CD4-positive, alpha-beta memory T cell (primary cell): ENCODE measurements at regions of chr17 and their contacts with region 1.

Region 1: DNA sequence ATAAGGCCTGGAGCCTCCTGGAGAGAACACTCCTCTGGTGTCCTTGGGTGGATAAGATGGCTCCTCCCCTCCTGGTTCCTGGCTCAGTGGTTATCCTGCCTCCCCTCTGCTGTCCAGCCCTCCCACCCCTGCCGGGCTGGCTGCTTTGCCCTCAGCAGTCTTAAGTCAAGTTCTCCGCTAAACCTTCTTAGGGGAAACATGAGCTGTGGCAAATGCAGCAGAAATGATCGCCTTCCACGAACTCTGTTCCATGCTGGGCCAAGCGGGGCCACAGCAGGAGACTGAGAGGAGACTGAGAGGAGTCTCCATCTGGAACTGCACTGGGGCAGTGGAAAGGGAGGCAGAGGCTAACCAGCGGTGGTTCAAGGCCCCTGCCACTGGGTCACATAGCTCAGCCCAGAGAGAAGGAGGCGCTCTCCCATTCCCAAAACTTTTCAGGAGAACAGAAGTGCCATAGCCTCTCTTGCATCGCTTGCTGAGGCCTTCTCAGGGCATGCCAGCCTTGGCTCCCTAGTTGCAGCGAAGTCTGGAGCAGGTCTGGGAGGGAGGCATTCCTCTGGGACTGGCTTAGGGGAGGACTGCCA is 26.9 kb downstream of the TNS4 start:
- DNase-seq: no peak
- H3K4me3 ChIP-seq: no peak overlapping the region
- H3K4me3 Mint-ChIP-seq: no peak overlapping the region
- H3K27ac ChIP-seq: no peak overlapping the region
- H3K27ac Mint-ChIP-seq: peak overlapping the region in 2 of 7 donors; percentile 18 to 68
- H3K4me1 ChIP-seq: peaks cover 32% of the 10 kb centered on the region
- H3K4me1 Mint-ChIP-seq: peaks cover 6 to 26% (median 6%) of the 10 kb centered on the region in 4 donors
- H3K27me3 ChIP-seq: no peaks in the 10 kb centered on the region
- H3K27me3 Mint-ChIP-seq: no peaks in the 10 kb centered on the region

Region 2: DNA sequence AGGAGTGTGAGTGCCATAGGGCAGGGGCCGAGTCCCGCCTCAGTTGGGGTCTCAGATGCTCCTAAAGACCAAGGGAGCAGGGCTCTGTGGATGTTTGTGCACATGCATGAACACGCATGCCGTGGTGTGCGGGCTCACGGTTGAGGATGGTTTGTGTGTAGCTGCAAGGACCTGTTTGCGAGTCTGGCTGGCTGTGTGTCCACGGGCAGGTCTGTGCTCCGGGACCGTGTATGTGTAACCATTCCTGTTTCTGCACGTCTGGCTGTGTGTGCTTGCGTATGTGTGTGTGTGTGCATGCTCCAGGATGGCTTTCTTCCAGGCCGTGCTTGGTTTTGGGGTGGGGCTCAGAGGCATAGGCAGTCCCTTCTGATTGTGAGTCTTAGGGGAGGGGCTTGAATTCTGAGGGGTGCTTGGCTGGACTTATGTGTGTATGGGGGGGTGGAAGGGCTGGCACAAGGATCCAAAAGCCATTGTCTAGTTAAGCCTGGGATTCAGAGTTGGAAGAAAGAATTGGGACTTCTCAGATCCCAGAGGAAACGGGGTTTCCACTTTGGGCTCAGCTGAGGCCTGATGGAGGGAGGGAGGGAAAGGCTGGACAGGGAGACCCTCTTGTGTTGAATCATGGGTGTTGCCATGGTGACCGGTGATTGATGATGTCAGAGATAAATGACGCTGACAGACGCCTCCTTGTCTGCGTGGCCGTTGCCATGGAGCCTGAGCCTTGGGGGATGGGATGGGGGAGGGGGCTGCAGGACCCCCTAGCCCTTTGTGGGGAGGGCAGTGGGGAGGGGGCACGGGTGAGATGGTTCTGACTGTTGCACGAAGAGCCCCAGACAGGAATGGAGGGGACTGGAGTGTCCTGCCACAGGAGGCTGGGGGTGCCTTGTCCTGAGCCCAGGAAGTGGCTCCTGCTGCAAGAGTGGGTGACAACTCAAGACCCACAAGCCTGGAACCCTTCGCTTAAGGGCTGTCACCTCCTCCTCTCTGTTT is 124.3 kb before region 1 on chr17:
- CTCF ChIA-PET with region 1: no interaction called
- POLR2A ChIA-PET with region 1: no interaction called
- intact Hi-C with region 1: no loop called
- DNase-seq: no peak
- H3K4me3 ChIP-seq: no peak overlapping the region
- H3K4me3 Mint-ChIP-seq: no peak overlapping the region
- H3K27ac ChIP-seq: no peak overlapping the region
- H3K27ac Mint-ChIP-seq: peak overlapping the region in 5 of 7 donors; percentile 46 to 95 (median 87)
- H3K4me1 ChIP-seq: peaks cover 33% of the 10 kb centered on the region
- H3K4me1 Mint-ChIP-seq: peaks cover 20 to 68% (median 37%) of the 10 kb centered on the region in 4 donors
- H3K27me3 ChIP-seq: no peaks in the 10 kb centered on the region
- H3K27me3 Mint-ChIP-seq: no peaks in the 10 kb centered on the region

Region 3: DNA sequence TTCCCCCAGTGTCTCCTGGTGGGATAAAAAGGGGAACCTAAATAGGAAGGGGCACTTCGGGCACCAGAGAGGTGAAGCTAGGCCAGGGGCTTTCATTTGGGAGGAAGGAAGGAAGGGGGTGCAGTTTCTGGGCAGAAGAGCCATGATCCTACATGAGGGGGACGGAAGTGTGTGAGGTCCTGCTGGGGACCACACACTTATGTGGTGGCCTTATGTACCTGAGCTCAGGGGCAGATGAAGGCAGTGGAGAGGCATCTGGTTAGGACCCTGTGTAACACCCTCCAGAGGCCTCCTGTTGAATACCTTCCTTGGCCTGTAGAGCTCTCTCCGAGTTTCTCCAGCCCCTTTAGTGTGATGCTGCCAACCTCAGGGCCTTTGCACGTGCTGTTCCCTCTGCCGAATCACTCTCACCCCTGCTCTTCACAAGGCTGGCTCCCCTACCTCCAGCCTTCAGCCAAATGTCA is 10.1 kb before region 1 on chr17:
- CTCF ChIA-PET with region 1: interaction called, 18 read pairs
- POLR2A ChIA-PET with region 1: no interaction called
- intact Hi-C with region 1: no loop called
- DNase-seq: no peak
- H3K4me3 ChIP-seq: no peak overlapping the region
- H3K4me3 Mint-ChIP-seq: no peak overlapping the region
- H3K27ac ChIP-seq: no peak overlapping the region
- H3K27ac Mint-ChIP-seq: peak overlapping the region in 2 of 7 donors; percentile 42 to 55
- H3K4me1 ChIP-seq: no peaks in the 10 kb centered on the region
- H3K4me1 Mint-ChIP-seq: no peaks in the 10 kb centered on the region
- H3K27me3 ChIP-seq: no peaks in the 10 kb centered on the region
- H3K27me3 Mint-ChIP-seq: no peaks in the 10 kb centered on the region

Region 4: DNA sequence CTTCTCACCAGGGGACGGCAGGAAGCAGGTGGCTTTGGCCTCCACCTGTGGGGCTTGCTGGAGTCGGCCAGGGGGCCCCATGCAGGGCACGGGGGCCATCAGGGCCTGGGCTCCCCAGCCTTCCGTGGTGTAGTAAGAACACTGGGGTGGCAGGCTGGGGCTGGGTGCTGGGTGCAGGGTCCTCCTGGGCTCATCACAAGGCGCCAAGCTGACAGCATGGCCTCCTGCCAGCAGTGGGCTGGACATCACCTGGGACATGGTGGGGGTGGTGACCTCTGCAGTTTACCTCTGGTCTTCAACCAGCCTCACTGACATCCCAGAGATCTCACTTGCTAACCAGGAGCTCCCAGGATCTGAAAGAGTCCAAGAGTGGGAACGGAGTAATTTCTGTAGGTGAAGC is 21.7 kb after region 1 on chr17:
- CTCF ChIA-PET with region 1: interaction called, 17 read pairs
- POLR2A ChIA-PET with region 1: interaction called, 27 read pairs
- intact Hi-C with region 1: no loop called
- DNase-seq: no peak
- H3K4me3 ChIP-seq: no peak overlapping the region
- H3K4me3 Mint-ChIP-seq: no peak overlapping the region
- H3K27ac ChIP-seq: no peak overlapping the region
- H3K27ac Mint-ChIP-seq: no peak overlapping the region
- H3K4me1 ChIP-seq: peaks cover 10% of the 10 kb centered on the region
- H3K4me1 Mint-ChIP-seq: peaks cover under 1 to 8% (median 6%) of the 10 kb centered on the region in 4 donors
- H3K27me3 ChIP-seq: no peaks in the 10 kb centered on the region
- H3K27me3 Mint-ChIP-seq: no peaks in the 10 kb centered on the region

Region 5: DNA sequence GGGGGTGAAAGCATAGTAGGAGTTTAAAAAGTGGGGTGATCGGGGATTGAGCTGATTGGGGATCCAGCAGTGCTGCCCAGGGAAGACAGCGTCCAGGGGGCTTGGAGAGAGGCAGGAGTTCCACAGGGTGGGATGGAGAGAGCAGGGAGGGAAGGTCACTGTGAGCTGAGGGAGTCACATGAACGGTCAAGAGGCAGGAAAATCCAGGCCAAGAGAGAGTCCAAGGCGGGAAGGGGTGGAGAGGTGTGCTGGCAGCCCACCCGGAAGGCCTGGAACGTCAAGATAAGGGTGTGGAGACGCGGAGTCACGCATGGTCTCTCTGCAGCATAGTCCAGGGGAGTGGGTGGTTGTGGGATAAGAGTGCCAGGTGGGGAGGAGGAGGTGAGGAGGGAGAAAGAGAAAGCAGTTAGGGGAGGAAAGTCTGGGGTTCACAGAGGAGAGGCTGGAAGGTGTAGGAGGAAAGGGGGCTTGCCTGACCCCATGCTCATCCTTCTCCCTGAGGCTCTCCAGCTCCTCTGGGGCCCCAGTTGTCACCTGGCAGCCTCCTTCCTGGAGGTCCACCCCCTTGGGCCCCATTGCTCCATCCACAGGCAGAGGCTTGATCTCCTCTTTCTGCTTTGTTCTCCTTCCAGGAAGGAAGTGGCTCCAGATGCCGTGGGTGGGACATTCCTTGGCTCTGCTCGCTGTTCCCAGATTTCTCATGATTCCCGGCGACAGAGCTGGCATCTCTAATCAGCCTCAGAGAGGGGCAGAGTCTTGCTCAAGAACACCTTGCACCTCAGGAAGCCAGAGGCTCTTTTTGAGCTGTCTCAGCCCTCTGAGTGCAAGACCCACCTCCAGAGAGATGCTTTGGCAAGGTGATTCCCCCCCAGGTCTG is 62.0 kb after region 1 on chr17:
- CTCF ChIA-PET with region 1: interaction called, 117 read pairs
- POLR2A ChIA-PET with region 1: interaction called, 192 read pairs
- intact Hi-C with region 1: no loop called
- DNase-seq: no peak
- H3K4me3 ChIP-seq: no peak overlapping the region
- H3K4me3 Mint-ChIP-seq: peak overlapping the region in 3 of 8 donors; percentile 6 to 67 (median 51)
- H3K27ac ChIP-seq: no peak overlapping the region
- H3K27ac Mint-ChIP-seq: peak overlapping the region; percentile 65 to 100 (median 88)
- H3K4me1 ChIP-seq: peaks cover 90% of the 10 kb centered on the region
- H3K4me1 Mint-ChIP-seq: peaks cover 68 to 97% (median 84%) of the 10 kb centered on the region in 4 donors
- H3K27me3 ChIP-seq: no peaks in the 10 kb centered on the region
- H3K27me3 Mint-ChIP-seq: peaks cover 0 to 6% of the 10 kb centered on the region in 2 donors

Region 6: DNA sequence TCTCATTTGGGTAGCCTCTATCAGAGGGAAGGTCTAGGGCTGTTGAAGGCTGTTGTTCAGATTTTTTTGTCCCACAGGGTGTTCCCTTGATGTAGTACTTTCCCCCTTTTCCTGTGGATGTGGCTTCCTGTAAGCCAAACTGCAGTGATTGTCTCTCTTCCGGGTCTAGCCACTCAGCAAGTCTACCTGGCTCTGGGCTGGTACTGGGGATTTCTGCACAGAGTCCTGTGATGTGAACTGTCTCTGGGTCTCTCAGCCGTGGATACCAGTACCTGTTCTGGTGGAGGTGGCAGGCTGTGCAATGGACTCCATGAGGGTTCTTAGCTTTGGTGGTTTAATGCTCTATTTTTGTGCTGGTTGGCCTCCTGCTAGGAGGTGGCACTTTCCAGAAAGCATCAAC is 114.0 kb after region 1 on chr17:
- CTCF ChIA-PET with region 1: no interaction called
- POLR2A ChIA-PET with region 1: no interaction called
- intact Hi-C with region 1: no loop called
- DNase-seq: peak in 1 of 5 donors; percentile 35
- H3K4me3 ChIP-seq: peak overlapping the region in 1 of 2 donors; percentile 1
- H3K4me3 Mint-ChIP-seq: peak overlapping the region in 7 of 8 donors; percentile 36 to 86 (median 75)
- H3K27ac ChIP-seq: no peak overlapping the region
- H3K27ac Mint-ChIP-seq: peak overlapping the region in 6 of 7 donors; percentile 9 to 89 (median 77)
- H3K4me1 ChIP-seq: peaks cover 50% of the 10 kb centered on the region
- H3K4me1 Mint-ChIP-seq: peaks cover 45 to 71% (median 56%) of the 10 kb centered on the region in 4 donors
- H3K27me3 ChIP-seq: no peaks in the 10 kb centered on the region
- H3K27me3 Mint-ChIP-seq: no peaks in the 10 kb centered on the region